ENCODE measurements at regions of chr21 and their contacts with region 1.

Region 1: GRCh38 chr21:46323227-46324128 is at the start of gene C21orf58:
- DNase-seq: peak; percentile 89
- ATAC-seq: peak; percentile 91
- H3K4me3 ChIP-seq: peak within 1 kb of the TSS; percentile 88
- H3K27ac ChIP-seq: peak within 1 kb of the TSS; percentile 94
- H3K4me1 ChIP-seq: peaks cover 5% of the 10 kb centered on the region
- H3K27me3 ChIP-seq: no peaks in the 10 kb centered on the region
- CTCF ChIP-seq: 0 out of 6 replicates have a peak, but pooled peaks of 1 of the 3 experiments have one; percentile 2
- EP300 ChIP-seq: no peak
- POLR2A ChIP-seq: peak; percentile 89
- RAD21 ChIP-seq: no peak
- polyA plus RNA-seq, gene C21orf58: 1.1 TPM

Region 2: DNA sequence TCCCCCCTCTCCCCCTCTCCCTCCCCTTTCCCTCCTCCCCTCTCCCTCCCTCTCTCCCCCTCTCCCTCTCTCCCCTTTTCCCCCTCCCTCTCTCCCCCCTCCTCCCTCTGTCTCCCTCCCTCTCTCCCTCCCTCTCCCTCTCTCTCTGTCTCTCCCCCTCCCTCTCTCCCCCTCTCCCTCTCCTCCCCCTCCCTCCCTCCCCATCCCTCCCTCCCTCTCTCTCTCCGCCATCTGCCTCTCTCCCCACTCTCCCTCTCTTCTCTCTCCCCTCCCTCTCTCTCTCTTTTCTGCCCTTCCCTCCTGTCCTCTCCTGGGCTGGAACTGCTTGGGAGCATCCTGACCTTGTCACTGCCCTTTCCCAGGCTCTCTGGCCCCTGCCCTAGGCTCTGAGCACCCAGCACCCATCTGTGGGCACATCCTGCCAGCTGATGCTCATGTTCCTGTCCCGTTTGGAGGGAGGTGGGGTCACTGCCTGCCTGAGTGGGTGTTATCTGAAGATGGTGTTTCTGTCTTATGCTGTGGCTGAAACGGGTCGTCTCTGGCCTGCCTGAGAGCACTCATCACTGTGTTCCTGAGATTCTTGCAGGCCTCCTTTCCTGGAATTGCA is 178.9 kb before region 1 on chr21:
- CTCF ChIA-PET with region 1: interaction called, 23 read pairs
- POLR2A ChIA-PET with region 1: no interaction called
- RAD21 ChIA-PET with region 1: interaction called, 17 read pairs
- SMC1A ChIA-PET with region 1: interaction called, 12 read pairs
- in situ Hi-C with region 1: no loop called
- intact Hi-C with region 1: no loop called
- DNase-seq: no peak
- ATAC-seq: no peak
- H3K4me3 ChIP-seq: no peak overlapping the region
- H3K27ac ChIP-seq: no peak overlapping the region
- H3K4me1 ChIP-seq: no peaks in the 10 kb centered on the region; the same call in 1 of the 2 replicates
- H3K27me3 ChIP-seq: no peaks in the 10 kb centered on the region
- CTCF ChIP-seq: no peak
- EP300 ChIP-seq: no peak
- POLR2A ChIP-seq: no peak
- RAD21 ChIP-seq: no peak

Region 3: DNA sequence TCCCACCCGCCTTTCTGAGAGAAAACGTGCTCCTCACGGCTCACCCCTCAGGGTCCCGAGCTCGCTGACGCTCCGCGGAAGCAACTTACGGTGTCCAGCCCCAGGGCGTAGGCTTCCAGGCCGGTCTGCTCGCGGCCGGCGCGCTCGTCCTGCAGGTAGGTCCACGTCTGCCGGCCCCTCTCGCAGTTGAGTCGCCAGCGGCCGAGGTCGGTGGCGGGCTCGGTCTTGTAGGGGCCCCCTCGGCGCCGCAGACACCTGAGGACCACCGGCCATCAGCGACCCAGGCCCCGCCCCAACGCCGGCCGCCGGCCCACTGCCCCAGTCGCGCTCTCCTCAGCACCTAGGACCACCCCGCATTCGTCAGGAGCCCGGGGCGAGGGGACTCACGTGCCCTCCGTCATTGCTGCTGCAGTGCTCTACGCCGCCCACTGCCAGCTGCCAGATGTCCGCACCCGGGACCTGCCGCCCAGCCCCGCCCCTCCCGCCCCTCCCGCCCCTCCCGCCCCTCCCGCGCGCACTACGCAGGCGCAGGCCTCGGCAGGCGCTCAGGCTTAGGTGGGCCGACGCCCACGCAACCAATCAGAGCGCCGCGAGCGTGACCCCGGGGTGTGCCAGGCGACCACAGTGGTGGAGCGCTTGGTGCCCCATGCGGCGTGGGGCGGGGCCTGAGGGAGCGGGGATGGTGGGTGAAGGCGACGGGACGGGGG is 95.0 kb before region 1 on chr21 and contains the start of gene LSS:
- CTCF ChIA-PET with region 1: interaction called, 8 read pairs
- POLR2A ChIA-PET with region 1: interaction called, 7 read pairs
- RAD21 ChIA-PET with region 1: interaction called, 6 read pairs
- SMC1A ChIA-PET with region 1: interaction called, 6 read pairs
- in situ Hi-C with region 1: no loop called
- intact Hi-C with region 1: loop called (anchors 1 kb)
- DNase-seq: peak; percentile 83
- ATAC-seq: peak; percentile 90
- H3K4me3 ChIP-seq: peak within 1 kb of the TSS; percentile 81
- H3K27ac ChIP-seq: peak within 1 kb of the TSS; percentile 73
- H3K4me1 ChIP-seq: peaks cover 5% of the 10 kb centered on the region; the same call in 1 of the 2 replicates
- H3K27me3 ChIP-seq: no peaks in the 10 kb centered on the region
- CTCF ChIP-seq: no peak
- EP300 ChIP-seq: no peak
- POLR2A ChIP-seq: peak; percentile 80
- RAD21 ChIP-seq: no peak
- polyA plus RNA-seq, gene LSS: 2.9 to 3.7 TPM

Region 4: GRCh38 chr21:46253610-46254124 is 69.8 kb before region 1 on chr21:
- CTCF ChIA-PET with region 1: interaction called, 8 read pairs
- POLR2A ChIA-PET with region 1: interaction called, 3 read pairs
- RAD21 ChIA-PET with region 1: interaction called, 3 read pairs
- SMC1A ChIA-PET with region 1: interaction called, 6 read pairs
- in situ Hi-C with region 1: no loop called
- intact Hi-C with region 1: loop called (anchors 5 kb)
- DNase-seq: peak; percentile 89
- ATAC-seq: peak; percentile 93
- H3K4me3 ChIP-seq: no peak overlapping the region
- H3K27ac ChIP-seq: peak overlapping the region; percentile 55
- H3K4me1 ChIP-seq: peaks cover 15% of the 10 kb centered on the region
- H3K27me3 ChIP-seq: no peaks in the 10 kb centered on the region
- CTCF ChIP-seq: no peak
- EP300 ChIP-seq: no peak
- POLR2A ChIP-seq: no peak
- RAD21 ChIP-seq: no peak

Region 5: DNA sequence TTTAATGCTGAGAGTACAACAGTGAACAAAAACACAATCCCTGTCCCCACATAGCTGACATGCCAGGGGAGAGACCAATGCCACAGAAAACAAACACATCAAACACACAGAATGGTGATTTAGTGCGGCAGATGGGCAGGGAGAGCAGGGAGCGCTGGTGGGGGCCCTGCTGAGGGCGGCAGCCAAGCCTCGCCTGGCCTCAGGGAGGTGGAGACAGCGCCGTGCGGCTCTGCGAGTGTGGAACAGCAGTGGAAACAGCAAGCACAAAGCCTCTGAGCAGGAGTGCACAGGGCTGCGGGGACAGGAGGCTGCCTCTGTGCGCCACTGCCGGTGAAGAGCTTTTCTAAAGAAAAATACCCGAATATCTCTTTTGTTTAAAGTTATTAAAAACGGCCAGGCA is 55.1 kb before region 1 on chr21:
- CTCF ChIA-PET with region 1: no interaction called
- POLR2A ChIA-PET with region 1: no interaction called
- RAD21 ChIA-PET with region 1: no interaction called
- SMC1A ChIA-PET with region 1: no interaction called
- in situ Hi-C with region 1: no loop called
- intact Hi-C with region 1: no loop called
- DNase-seq: no peak
- ATAC-seq: no peak
- H3K4me3 ChIP-seq: no peak overlapping the region
- H3K27ac ChIP-seq: no peak overlapping the region
- H3K4me1 ChIP-seq: no peaks in the 10 kb centered on the region
- H3K27me3 ChIP-seq: no peaks in the 10 kb centered on the region
- CTCF ChIP-seq: no peak
- EP300 ChIP-seq: no peak
- POLR2A ChIP-seq: no peak
- RAD21 ChIP-seq: no peak

Region 6: GRCh38 chr21:46285761-46286496 is 37.5 kb before region 1 on chr21 and contains the start of gene YBEY:
- CTCF ChIA-PET with region 1: interaction called, 10 read pairs
- POLR2A ChIA-PET with region 1: interaction called, 7 read pairs
- RAD21 ChIA-PET with region 1: interaction called, 8 read pairs
- SMC1A ChIA-PET with region 1: interaction called, 12 read pairs
- in situ Hi-C with region 1: no loop called
- intact Hi-C with region 1: loop called (anchors 1 kb)
- DNase-seq: peak; percentile 59
- ATAC-seq: peak; percentile 96
- H3K4me3 ChIP-seq: peak within 1 kb of the TSS; percentile 97
- H3K27ac ChIP-seq: peak within 1 kb of the TSS; percentile 80
- H3K4me1 ChIP-seq: peaks cover 13% of the 10 kb centered on the region
- H3K27me3 ChIP-seq: no peaks in the 10 kb centered on the region
- CTCF ChIP-seq: peak; percentile 35 to 64 (median 35); a peak in 5 of 6 replicates
- EP300 ChIP-seq: no peak
- POLR2A ChIP-seq: peak; percentile 91
- RAD21 ChIP-seq: peak; percentile 35; the same call in 1 of the 2 replicates
- polyA plus RNA-seq, gene YBEY: 6.5 to 11.3 TPM

Region 7: GRCh38 chr21:46368533-46369285 is 45.2 kb after region 1 on chr21:
- CTCF ChIA-PET with region 1: interaction called, 8 read pairs
- POLR2A ChIA-PET with region 1: interaction called, 7 read pairs
- RAD21 ChIA-PET with region 1: interaction called, 12 read pairs
- SMC1A ChIA-PET with region 1: interaction called, 11 read pairs
- in situ Hi-C with region 1: no loop called
- intact Hi-C with region 1: no loop called
- DNase-seq: peak; percentile 65
- ATAC-seq: peak; percentile 91
- H3K4me3 ChIP-seq: peak overlapping the region; percentile 39; the same call in 1 of the 2 replicates
- H3K27ac ChIP-seq: peak overlapping the region; percentile 88
- H3K4me1 ChIP-seq: peaks cover 31% of the 10 kb centered on the region
- H3K27me3 ChIP-seq: no peaks in the 10 kb centered on the region
- CTCF ChIP-seq: no peak
- EP300 ChIP-seq: peak in 1 of 2 experiments; percentile 47; a peak in 2 of 4 replicates
- POLR2A ChIP-seq: peak; percentile 65
- RAD21 ChIP-seq: no peak

Region 8: DNA sequence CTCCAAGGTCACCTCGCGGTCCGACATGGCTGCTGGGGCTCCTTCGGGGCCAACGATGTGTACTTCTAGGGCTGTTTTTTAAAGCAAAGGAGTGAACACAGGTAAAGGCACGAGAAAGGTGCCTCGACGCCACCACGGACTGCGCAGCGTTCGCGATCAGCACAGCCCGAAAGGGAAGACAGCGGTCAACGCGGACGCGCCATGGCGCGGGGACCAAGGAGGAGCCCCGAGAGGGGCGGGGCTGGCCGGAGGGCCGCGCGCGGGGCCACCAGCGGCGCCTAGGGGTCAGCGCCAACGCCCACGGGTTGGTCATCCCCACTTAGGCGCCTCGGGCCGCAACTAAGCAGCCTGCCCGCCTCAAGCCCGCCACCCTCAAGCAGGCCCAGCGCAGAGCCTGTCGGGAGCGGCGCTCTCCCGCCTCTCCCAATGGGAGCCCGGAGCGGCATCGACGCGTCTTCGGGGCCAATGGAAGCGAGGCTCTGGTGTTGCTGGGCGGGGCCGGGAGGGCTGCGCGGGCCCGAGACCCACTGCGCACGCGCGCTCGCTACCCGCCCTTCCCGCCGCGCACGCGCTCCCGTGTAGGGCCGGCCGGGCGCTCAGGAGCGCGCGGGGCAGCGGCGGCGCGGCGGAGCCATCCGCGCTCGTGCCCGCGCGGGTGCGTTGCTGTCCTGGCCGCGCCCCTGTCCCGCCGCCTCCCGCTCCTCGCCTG is 135.0 kb after region 1 on chr21 and contains the start of gene DIP2A:
- CTCF ChIA-PET with region 1: no interaction called
- POLR2A ChIA-PET with region 1: interaction called, 7 read pairs
- RAD21 ChIA-PET with region 1: interaction called, 4 read pairs
- SMC1A ChIA-PET with region 1: interaction called, 6 read pairs
- in situ Hi-C with region 1: no loop called
- intact Hi-C with region 1: loop called (anchors 5 kb)
- DNase-seq: peak; percentile 85
- ATAC-seq: peak; percentile 97
- H3K4me3 ChIP-seq: peak within 1 kb of the TSS; percentile 87
- H3K27ac ChIP-seq: peak within 1 kb of the TSS; percentile 95
- H3K4me1 ChIP-seq: no peaks in the 10 kb centered on the region
- H3K27me3 ChIP-seq: no peaks in the 10 kb centered on the region
- CTCF ChIP-seq: peak in 2 of 3 experiments; percentile 9; a peak in 1 of 6 replicates
- EP300 ChIP-seq: no peak
- POLR2A ChIP-seq: peak; percentile 96
- RAD21 ChIP-seq: no peak
- polyA plus RNA-seq, gene DIP2A: 1.7 to 3.4 TPM

Measured in GM12878 (cell line).